Right ventricle myocardium superior (tissue), 1 donor: ENCODE measurements at regions of chr22 and their contacts with region 1.

Region 1: DNA sequence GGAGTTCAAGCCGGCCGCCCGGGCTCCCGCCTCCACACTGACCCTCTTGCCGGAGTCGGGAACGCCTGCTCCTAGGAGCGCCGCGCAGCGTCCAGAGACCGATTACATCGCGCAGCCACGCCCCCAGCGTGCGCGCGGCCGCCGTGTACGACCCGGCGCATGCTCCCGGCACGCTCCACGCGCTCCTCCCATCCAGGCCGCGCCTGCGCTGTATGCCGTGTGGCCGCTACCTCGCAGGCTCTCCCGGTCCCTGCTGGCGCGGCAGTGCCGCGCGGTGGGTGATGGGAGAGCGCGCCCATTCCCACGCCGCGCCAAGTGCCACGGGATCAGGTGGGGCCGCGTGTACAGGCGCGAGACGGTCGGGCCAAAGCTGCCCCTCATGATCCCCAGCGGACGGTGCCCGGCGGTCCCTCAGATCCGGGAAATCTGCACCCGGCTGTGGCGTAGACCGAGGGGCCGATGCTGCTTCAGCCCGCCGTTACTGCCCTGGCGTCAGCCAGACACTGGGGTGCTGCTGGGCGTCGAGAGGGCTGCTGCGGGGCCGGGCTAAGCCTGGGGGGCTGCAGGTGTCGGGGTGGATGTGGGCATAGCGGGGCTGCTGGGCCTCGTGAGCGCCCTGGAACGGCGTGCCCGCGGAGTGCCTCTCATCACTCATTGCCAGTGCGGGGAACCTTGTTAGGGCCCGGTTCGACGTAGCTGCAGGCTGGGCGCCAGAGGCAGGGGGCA is at the starts of genes GNB1L and RTL10:
- DNase-seq: peak; percentile 99
- ATAC-seq: peak; percentile 99
- total RNA-seq, gene GNB1L: 2.5 TPM
- total RNA-seq, gene RTL10: 6.2 TPM

Region 2: GRCh38 chr22:19806213-19807145 is 48.5 kb before region 1 on chr22:
- intact Hi-C with region 1: loop called (anchors 5 kb)
- DNase-seq: no peak
- ATAC-seq: no peak